Activated naive CD4-positive, alpha-beta T cell treated with anti-CD3 and anti-CD28 coated beads for 36 hours (primary cell): ENCODE measurements at regions of chr3 and their contacts with region 1.

Region 1: GRCh38 chr3:43503067-43503728 is 118.6 kb downstream of the ANO10 start:
- DNase-seq: no peak
- H3K4me3 Mint-ChIP-seq: no peak overlapping the region
- H3K27ac Mint-ChIP-seq: no peak overlapping the region
- H3K4me1 Mint-ChIP-seq: peaks cover 64% of the 10 kb centered on the region
- H3K27me3 Mint-ChIP-seq: no peaks in the 10 kb centered on the region

Region 2: GRCh38 chr3:42852441-42852840 is 650.8 kb before region 1 on chr3:
- CTCF ChIA-PET with region 1: no interaction called
- intact Hi-C with region 1: no loop called
- DNase-seq: no peak
- H3K4me3 Mint-ChIP-seq: no peak overlapping the region
- H3K27ac Mint-ChIP-seq: no peak overlapping the region
- H3K4me1 Mint-ChIP-seq: peaks cover 4% of the 10 kb centered on the region
- H3K27me3 Mint-ChIP-seq: peaks cover 6% of the 10 kb centered on the region

Region 3: GRCh38 chr3:42961633-42962032 is 541.6 kb before region 1 on chr3:
- CTCF ChIA-PET with region 1: interaction called, 9 read pairs
- intact Hi-C with region 1: loop called (anchors 1 kb)
- DNase-seq: peak; percentile 50
- H3K4me3 Mint-ChIP-seq: no peak overlapping the region
- H3K27ac Mint-ChIP-seq: no peak overlapping the region
- H3K4me1 Mint-ChIP-seq: peaks cover 20% of the 10 kb centered on the region
- H3K27me3 Mint-ChIP-seq: no peaks in the 10 kb centered on the region

Region 4: GRCh38 chr3:43004282-43004681 is 498.9 kb before region 1 on chr3:
- CTCF ChIA-PET with region 1: no interaction called
- intact Hi-C with region 1: no loop called
- DNase-seq: no peak
- H3K4me3 Mint-ChIP-seq: no peak overlapping the region
- H3K27ac Mint-ChIP-seq: no peak overlapping the region
- H3K4me1 Mint-ChIP-seq: peaks cover 23% of the 10 kb centered on the region
- H3K27me3 Mint-ChIP-seq: no peaks in the 10 kb centered on the region

Region 5: DNA sequence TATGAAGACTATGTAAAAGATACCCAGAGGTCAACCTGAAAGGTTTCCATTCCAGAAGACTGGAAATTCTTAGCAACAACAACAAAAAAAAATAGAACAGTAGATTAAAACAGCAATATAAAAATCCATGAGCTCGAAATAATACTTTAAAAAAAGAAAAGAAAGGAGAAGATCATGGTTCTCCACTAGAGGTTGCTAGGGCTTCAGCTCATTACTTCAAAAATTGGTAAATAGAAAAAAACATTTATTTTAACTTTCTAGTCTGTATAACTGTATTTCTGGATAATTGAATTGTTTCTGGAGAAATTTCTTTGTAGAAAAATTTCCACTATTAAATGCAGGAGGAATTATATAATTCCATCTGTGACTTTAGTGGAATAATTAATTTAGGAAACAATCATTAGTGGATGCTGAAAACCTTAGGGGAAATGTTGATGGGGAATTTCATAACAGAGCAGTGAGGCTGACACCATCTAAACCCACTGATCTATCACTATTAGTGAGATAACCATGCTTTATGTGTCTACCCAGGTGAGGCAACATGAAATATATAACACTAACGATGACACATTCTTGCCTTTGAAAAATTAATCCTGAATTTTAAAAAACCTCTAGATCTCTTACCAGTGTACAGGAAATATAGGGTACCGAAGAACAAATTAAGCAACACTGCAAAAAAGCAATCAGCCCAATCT is 279.4 kb before region 1 on chr3:
- CTCF ChIA-PET with region 1: interaction called, 15 read pairs
- intact Hi-C with region 1: loop called (anchors 1 kb)
- DNase-seq: no peak
- H3K4me3 Mint-ChIP-seq: no peak overlapping the region
- H3K27ac Mint-ChIP-seq: no peak overlapping the region
- H3K4me1 Mint-ChIP-seq: peaks cover 49% of the 10 kb centered on the region
- H3K27me3 Mint-ChIP-seq: no peaks in the 10 kb centered on the region

Region 6: DNA sequence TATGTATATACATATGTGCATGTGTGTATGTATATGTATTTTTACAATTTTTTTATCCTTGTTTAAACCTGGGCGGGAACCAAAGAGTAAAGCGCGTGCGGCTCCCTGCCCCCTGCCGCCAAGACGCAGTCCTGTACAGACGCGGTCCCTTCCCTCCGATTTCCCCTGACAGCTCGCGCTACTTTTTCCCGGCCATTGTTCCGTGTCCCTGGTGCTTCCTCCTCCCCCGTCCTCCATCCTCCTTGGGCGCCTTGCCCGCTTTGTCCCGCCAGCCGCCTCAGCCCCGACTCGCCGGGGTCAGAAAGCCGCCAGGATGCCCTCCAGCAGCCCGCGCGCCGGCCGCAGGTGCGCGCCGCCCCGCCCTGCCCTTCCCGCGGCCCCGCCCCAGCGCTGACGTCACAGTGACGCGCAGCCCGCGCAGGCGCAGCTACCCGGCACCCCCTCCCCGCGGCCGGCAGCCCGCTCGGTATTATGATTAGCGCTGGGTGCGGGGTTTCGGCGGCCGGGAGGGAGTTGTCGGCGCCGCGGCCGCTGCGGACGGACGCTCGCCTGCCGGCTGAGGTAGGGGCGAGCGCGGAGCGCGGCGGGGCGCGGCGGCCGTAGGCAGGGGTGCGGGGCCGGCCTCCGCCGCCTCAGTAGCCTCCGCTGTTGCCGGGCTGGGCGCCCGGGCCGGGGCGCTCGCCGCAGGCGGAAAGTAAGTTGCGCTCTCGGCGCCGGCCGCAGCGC is 216.9 kb before region 1 on chr3 and contains the start of gene SNRK:
- CTCF ChIA-PET with region 1: interaction called, 4 read pairs
- intact Hi-C with region 1: loop called (anchors 2 kb)
- DNase-seq: peak; percentile 91
- H3K4me3 Mint-ChIP-seq: peak within 1 kb of the TSS; percentile 91
- H3K27ac Mint-ChIP-seq: peak within 1 kb of the TSS; percentile 93
- H3K4me1 Mint-ChIP-seq: peaks cover 33% of the 10 kb centered on the region
- H3K27me3 Mint-ChIP-seq: no peaks in the 10 kb centered on the region
- total RNA-seq, gene SNRK: 21.1 TPM

Region 7: DNA sequence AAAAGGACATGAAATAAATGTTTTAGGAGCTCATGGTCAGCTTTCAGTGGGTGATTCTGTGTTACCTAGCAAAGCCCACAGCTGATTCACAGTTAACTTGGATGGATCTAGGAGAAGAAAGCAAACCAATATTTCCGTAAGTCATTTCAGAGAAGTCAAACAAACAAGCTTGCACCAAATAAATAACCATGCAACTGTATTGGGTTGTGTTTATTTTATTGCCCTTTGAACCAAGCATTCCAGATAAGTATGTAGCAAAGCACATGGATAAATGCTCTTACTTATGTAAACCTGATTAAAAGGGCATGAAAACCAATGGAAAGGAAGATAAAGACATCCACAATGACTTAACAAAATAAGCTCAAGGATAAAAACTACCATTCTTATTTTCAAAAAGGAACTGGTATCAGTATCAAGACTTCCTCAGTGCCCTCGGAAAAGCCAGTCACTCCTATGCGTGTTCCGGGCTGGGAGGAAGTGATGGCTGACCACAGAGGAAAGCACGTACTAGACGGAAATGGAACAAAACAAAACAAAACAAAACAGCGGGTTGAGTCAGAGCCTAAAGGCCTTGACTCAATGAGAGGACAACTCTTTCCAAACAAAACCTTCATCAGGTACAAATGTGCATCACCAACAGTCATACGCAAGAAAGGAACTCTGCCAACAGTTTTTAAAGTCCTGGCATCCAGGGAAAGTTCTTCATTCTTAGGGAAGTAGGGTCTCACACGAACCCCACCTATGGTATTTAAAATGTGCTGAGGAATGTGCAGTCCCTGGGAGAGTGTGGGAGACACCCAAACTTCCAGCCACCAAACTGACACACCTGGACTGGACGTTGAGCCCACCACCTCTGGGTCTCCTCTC is 113.6 kb before region 1 on chr3:
- CTCF ChIA-PET with region 1: interaction called, 4 read pairs
- intact Hi-C with region 1: loop called (anchors 1 kb)
- DNase-seq: peak; percentile 87
- H3K4me3 Mint-ChIP-seq: peak overlapping the region; percentile 9
- H3K27ac Mint-ChIP-seq: peak overlapping the region; percentile 55
- H3K4me1 Mint-ChIP-seq: peaks cover 63% of the 10 kb centered on the region
- H3K27me3 Mint-ChIP-seq: no peaks in the 10 kb centered on the region

Region 8: GRCh38 chr3:43515208-43515917 is 12.2 kb after region 1 on chr3:
- CTCF ChIA-PET with region 1: interaction called, 6 read pairs
- intact Hi-C with region 1: loop called (anchors 1 kb)
- DNase-seq: no peak
- H3K4me3 Mint-ChIP-seq: no peak overlapping the region
- H3K27ac Mint-ChIP-seq: no peak overlapping the region
- H3K4me1 Mint-ChIP-seq: peaks cover 7% of the 10 kb centered on the region
- H3K27me3 Mint-ChIP-seq: no peaks in the 10 kb centered on the region

Region 9: DNA sequence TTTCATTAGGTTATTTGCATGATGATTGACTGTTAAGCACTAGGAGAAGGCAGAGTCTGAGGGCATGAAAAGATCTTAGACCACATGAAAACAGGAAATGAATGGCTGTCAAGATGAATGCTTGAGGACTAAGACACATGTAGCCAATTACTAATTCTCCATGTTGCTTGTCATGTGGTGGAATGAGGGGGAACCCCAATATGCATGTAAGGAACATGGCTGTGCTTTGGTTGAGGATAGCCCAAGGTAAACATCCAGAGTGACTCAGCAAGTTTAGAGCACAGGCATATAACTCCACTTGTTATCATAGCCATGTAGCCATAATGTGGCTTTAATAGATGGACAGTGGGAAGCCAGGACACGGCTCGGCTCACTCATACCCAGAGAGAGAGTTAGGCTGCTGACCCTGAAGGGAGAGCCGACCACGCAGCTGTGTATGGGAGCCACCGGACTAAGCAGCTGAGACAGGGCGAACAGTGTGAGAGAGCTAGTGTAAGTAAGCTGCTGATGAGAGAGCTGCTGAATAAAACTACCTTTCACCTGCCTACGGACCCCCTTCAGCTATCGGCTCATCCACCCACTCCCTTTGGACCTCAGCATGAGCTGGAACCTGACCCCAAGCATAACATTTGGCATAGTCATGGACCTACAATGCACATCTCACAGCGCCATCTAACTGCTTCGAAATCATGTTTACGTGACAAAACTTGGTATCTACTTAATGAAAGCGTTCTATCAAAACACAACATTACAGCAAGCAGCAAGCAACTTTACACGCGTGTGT is 81.0 kb after region 1 on chr3:
- CTCF ChIA-PET with region 1: no interaction called
- intact Hi-C with region 1: loop called (anchors 1 kb)
- DNase-seq: peak; percentile 40
- H3K4me3 Mint-ChIP-seq: no peak overlapping the region
- H3K27ac Mint-ChIP-seq: no peak overlapping the region
- H3K4me1 Mint-ChIP-seq: peaks cover 14% of the 10 kb centered on the region
- H3K27me3 Mint-ChIP-seq: no peaks in the 10 kb centered on the region